ENCODE measurements at regions of chr6 and their contacts with region 1.

Region 1: GRCh38 chr6:30489081-30490025 is at the start of gene HLA-E:
- DNase-seq: peak; percentile 94
- ATAC-seq: peak; percentile 96
- total RNA-seq, gene HLA-E: 210 to 242 TPM

Region 2: DNA sequence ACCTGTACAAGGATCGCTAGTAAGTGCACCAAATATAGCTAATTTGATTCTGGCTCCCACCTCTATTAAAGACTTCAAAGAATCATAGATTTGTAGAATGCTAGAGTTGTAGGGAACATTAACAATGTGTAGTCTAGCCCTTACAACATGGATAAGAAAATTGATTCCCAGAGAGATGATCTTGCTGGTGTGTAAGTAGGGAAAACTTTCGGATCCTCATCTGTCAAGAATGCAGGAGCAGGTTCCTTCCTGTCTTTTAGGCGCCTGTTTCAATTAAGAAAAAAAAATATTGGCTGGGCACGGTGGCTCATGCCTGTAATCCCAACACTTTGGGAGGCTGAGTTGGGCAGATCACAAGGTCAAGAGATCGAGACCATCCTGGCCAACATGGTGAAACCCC is 401.5 kb before region 1 on chr6:
- intact Hi-C with region 1: no loop called
- DNase-seq: no peak
- ATAC-seq: no peak

Region 3: DNA sequence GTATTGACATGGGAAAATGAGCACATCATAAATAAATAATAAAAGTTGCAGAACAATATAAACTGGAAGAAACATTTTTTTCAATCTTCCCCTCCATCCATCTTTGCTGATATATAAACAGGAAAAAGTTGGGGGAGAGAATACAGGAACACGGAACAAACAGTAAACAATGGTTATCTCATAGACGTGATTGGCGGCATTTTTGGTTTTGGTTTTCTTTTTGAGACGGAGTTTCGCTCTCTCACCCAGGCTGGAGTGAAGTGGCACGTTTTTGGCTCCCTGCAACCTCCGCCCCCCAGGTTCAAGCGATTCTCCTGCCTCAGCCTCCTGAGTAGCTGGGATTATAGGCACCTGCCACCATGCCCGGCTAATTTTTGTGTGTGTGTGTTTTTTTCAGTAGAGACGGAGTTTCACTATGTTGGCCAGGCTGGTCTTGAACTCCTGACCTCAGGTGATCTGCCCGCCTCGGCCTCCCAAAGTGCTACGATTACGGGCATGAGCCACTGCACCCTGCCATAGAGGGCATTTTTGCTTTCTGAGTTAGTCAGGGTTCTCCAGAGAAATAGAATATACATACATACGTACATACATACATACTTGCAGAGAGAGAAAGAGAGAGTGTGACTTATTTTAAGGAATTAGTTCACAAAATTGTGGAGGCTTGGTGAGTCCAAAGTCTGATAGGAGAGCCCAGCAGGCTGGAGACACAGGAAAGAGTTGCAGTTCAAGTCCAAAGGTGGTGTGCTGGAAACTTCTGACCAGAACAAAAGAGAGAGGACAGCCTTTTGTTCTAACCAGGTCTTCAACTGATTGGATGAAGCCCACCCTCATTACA is 44.3 kb after region 1 on chr6:
- intact Hi-C with region 1: loop called in 1 of 2 experiments (anchors 5 kb)
- DNase-seq: no peak
- ATAC-seq: no peak

Region 4: DNA sequence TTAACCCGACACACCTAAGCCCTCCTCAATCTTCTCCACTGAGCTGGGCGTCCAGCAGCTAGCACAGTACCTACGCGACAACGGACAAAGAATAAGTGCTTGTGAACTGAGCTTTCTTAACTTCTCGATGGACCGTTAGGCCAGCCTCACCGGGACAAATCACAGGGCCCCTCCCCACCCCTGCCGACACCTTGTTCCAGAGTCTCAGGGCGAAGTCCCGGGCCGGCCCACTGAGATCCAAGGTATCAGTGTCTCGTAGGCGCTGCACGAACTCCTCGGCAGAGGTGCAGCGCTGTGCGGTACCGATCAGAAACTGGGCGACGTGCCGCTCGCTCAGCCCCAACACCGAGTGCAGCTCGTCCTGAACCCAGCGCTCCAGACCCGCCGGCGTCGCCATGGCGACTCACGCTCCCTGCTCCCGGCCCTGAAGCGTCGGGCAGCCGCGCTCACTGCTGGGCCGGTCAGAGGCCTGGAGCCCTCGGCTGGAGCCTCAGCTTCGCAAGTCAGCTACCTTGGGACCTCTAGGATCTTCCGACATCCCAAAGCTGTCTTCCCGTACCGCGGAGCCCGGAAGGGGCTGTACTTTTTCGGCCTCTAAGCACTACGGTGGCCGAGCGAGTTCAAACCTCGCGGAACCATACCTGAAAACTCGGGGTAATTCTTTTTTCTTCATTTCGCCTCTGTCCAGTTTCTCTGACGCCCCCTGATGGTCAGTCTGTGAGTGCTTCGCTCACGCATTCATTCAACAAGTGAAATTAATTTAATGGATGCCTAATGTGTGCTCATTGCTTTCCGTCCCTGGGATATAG is 183.3 kb after region 1 on chr6 and contains the start of gene DHX16:
- intact Hi-C with region 1: loop called in 1 of 2 experiments (anchors 10 kb)
- DNase-seq: peak; percentile 97
- ATAC-seq: peak; percentile 91 to 94
- total RNA-seq, gene DHX16: 17.6 to 18.6 TPM